ENCODE measurements at regions of chr12 and their contacts with region 1.

Region 1: GRCh38 chr12:124026755-124027745 is 54.0 kb downstream of the ZNF664 start:
- DNase-seq: peak; percentile 58 to 75
- ATAC-seq: peak; percentile 88 to 89
- H3K4me3 ChIP-seq: no peak overlapping the region
- H3K27ac ChIP-seq: peak overlapping the region; percentile 74 to 84 (median 80)
- H3K4me1 ChIP-seq: peaks cover 23 to 27% of the 10 kb centered on the region in 2 donors
- H3K27me3 ChIP-seq: no peaks in the 10 kb centered on the region
- CTCF ChIP-seq: no peak
- POLR2A ChIP-seq: peak in 1 of 2 donors; percentile 30

Region 2: DNA sequence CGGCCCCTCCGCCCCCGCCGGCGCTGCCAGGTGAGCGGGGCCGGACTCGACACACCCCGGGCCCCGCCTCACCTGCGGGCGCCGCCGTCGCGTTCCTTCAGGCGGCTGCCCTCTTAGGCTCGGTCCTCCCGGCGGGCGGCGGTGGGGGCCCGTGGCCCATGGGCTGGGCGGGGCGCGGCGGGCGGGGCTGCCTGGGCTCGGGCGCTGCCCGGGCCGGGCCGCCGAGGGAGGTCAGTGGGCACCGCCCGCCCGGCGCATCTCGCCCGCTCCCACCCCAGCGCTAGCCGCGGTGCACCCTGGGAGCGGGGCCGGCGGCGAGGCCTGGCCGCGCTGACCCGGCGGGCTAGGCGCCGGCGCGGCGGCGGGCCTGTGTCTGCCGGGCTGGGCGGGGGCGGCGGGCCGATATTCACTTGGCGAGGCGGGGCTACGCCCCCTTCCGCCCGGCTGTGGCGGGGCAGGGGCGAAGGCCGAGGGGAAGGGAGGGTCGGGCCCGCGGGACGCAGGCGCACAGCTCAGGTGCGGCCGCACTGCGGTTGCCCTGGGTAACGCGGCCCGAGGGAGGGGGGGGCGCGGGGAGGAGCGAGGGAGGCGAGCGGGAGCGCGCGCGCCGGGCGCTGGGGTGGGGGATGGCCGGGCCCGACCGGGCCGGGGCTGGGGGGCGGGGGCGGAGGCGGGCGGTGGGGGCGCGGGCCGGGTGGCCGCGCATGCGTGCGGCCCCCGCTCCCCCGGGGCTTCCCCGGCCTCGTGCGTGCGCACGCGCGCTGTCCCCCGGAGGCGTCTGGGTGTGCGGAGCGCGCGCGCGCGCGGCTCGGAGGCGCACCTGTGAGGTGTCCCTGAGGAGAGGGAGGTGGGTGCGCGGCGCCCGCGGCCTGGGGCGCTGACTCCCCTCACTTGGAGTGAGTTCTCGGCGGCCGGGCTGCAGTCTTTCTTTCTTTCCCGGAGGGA is 54.3 kb before region 1 on chr12 and contains the starts of genes CCDC92 and ZNF664:
- in situ Hi-C with region 1: no loop called
- intact Hi-C with region 1: loop called (anchors 1 kb)
- DNase-seq: peak; percentile 85 to 89
- ATAC-seq: peak; percentile 79 to 82
- H3K4me3 ChIP-seq: peak within 1 kb of the TSS; percentile 72 to 96 (median 94)
- H3K27ac ChIP-seq: peak within 1 kb of the TSS; percentile 91 to 92 (median 92)
- H3K4me1 ChIP-seq: peaks cover 10 to 13% of the 10 kb centered on the region in 2 donors
- H3K27me3 ChIP-seq: no peaks in the 10 kb centered on the region
- CTCF ChIP-seq: peak in 3 of 5 experiments; percentile 15 to 33 (median 22)
- POLR2A ChIP-seq: peak; percentile 65 to 77
- total RNA-seq, gene CCDC92: 21.1 to 29.1 (median 23.7) TPM
- total RNA-seq, gene ZNF664: 18.1 to 37.0 (median 32.6) TPM

Region 3: GRCh38 chr12:124059752-124060151 is 32.7 kb after region 1 on chr12:
- in situ Hi-C with region 1: no loop called
- intact Hi-C with region 1: no loop called
- DNase-seq: no peak
- ATAC-seq: no peak
- H3K4me3 ChIP-seq: no peak overlapping the region
- H3K27ac ChIP-seq: no peak overlapping the region
- H3K4me1 ChIP-seq: no peaks in the 10 kb centered on the region
- H3K27me3 ChIP-seq: no peaks in the 10 kb centered on the region
- CTCF ChIP-seq: no peak
- POLR2A ChIP-seq: no peak